Activated CD4-positive, alpha-beta T cell treated with anti-CD3 and anti-CD28 coated beads for 36 hours (primary cell): ENCODE measurements at regions of chr1 and their contacts with region 1.

Region 1: GRCh38 chr1:210328746-210329503 is at the start of gene HHAT:
- DNase-seq: peak; percentile 80
- ATAC-seq: peak; percentile 34
- H3K4me3 Mint-ChIP-seq: peak within 1 kb of the TSS; percentile 82
- H3K27ac Mint-ChIP-seq: peak within 1 kb of the TSS; percentile 95
- H3K4me1 Mint-ChIP-seq: peaks cover 36% of the 10 kb centered on the region
- H3K27me3 Mint-ChIP-seq: peaks cover 3% of the 10 kb centered on the region
- total RNA-seq, gene HHAT: 0.82 to 0.84 TPM

Region 2: GRCh38 chr1:209674957-209675564 is 653.9 kb before region 1 on chr1 and contains the start of gene G0S2:
- CTCF ChIA-PET with region 1: interaction called, 5 read pairs
- POLR2A ChIA-PET with region 1: no interaction called
- intact Hi-C with region 1: loop called in 1 of 2 experiments (anchors 2 kb)
- DNase-seq: peak; percentile 70
- ATAC-seq: peak; percentile 31
- H3K4me3 Mint-ChIP-seq: peak within 1 kb of the TSS; percentile 71
- H3K27ac Mint-ChIP-seq: peak within 1 kb of the TSS; percentile 84
- H3K4me1 Mint-ChIP-seq: peaks cover 56% of the 10 kb centered on the region
- H3K27me3 Mint-ChIP-seq: peaks cover 38% of the 10 kb centered on the region
- total RNA-seq, gene G0S2: 21.9 to 22.8 TPM

Region 3: DNA sequence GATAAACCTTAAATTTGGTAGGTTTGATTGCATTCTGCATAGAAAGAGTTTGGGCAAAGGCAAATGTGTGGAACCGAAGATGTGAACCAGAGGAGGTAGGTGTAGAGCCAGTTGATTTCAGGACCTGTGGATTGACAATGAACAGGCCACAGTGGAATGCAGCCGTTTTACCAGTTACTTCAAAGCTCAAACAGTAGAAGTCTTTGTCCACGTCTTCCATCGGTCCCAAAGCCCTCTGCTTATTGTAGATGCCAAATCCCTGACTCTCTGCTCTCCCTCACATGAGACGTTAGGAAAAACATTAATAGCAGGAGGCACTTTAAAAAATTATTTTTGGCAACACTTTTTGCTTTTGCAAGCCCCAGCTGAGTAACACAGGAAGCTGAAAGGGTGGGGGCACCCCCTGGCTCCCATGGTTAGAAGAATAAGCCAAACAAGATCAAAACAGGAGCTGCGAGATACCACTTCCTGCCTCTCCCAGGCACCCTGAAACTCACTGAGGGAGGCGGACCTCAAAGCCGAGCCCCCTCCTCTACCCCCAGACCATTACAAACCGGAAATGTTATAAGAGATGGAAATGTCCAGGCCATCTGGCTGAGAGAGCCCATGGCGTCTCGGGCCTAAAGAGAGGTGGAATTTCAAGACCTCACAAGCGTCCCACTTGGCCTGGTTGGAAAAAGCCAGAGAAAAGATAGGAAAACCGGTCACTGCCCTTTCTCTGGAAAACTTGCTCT is 559.6 kb before region 1 on chr1:
- CTCF ChIA-PET with region 1: no interaction called
- POLR2A ChIA-PET with region 1: no interaction called
- intact Hi-C with region 1: loop called in 1 of 2 experiments (anchors 5 kb)
- DNase-seq: peak; percentile 88
- ATAC-seq: peak; percentile 67
- H3K4me3 Mint-ChIP-seq: no peak overlapping the region
- H3K27ac Mint-ChIP-seq: no peak overlapping the region
- H3K4me1 Mint-ChIP-seq: peaks cover 48% of the 10 kb centered on the region
- H3K27me3 Mint-ChIP-seq: no peaks in the 10 kb centered on the region

Region 4: DNA sequence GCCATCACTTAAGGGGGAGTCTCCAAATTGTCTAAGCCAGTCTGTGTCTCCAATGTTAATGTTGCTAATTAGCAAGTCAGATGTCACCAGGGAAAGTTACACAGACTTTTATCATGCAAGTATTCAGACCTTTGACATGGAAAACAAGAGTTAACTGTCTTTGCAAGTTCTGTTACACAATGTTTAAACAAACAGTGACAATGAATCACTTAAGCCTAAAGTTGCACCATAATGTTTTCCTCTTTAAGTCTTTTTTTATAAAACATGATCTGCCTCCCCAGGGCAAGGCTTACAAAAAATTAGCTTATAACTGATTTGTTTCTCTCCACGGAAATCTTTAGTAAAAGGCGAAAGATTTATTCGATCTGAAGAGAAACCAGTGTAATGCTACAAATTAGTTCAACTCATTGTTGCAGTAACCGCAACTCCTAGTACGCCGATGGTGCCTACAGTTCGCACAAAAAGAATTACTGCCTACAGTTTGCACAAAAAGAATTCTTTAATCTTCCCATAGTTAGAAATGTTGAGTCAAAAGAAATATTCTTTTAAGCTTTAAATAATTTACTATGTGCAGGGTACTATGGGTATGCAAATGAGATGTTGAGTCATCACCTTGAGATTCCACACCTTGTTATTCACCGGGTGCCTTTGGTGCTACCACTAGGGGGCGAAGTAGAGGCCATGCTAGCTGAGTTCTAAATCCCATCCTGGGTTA is 45.1 kb after region 1 on chr1:
- CTCF ChIA-PET with region 1: interaction called, 8 read pairs
- POLR2A ChIA-PET with region 1: interaction called, 78 read pairs
- intact Hi-C with region 1: loop called (anchors 1 kb)
- DNase-seq: peak; percentile 90
- ATAC-seq: peak; percentile 82
- H3K4me3 Mint-ChIP-seq: no peak overlapping the region
- H3K27ac Mint-ChIP-seq: peak overlapping the region; percentile 82
- H3K4me1 Mint-ChIP-seq: peaks cover 27% of the 10 kb centered on the region
- H3K27me3 Mint-ChIP-seq: no peaks in the 10 kb centered on the region

Region 5: GRCh38 chr1:210747890-210748289 is 419.0 kb after region 1 on chr1:
- CTCF ChIA-PET with region 1: no interaction called
- POLR2A ChIA-PET with region 1: no interaction called
- intact Hi-C with region 1: no loop called
- DNase-seq: no peak
- ATAC-seq: no peak
- H3K4me3 Mint-ChIP-seq: no peak overlapping the region
- H3K27ac Mint-ChIP-seq: no peak overlapping the region
- H3K4me1 Mint-ChIP-seq: no peaks in the 10 kb centered on the region
- H3K27me3 Mint-ChIP-seq: peaks cover 4% of the 10 kb centered on the region

Region 6: GRCh38 chr1:210882414-210883221 is 553.7 kb after region 1 on chr1:
- CTCF ChIA-PET with region 1: no interaction called
- POLR2A ChIA-PET with region 1: no interaction called
- intact Hi-C with region 1: loop called in 1 of 2 experiments (anchors 10 kb)
- DNase-seq: peak; percentile 12
- ATAC-seq: peak; percentile 84
- H3K4me3 Mint-ChIP-seq: no peak overlapping the region
- H3K27ac Mint-ChIP-seq: peak overlapping the region; percentile 77
- H3K4me1 Mint-ChIP-seq: peaks cover 15% of the 10 kb centered on the region
- H3K27me3 Mint-ChIP-seq: peaks cover 18% of the 10 kb centered on the region